ENCODE measurements at regions of chr1 and their contacts with region 1.

Region 1: GRCh38 chr1:1307908-1308755 is at the starts of genes ACAP3 and PUSL1:
- DNase-seq: peak; percentile 92 to 94 (median 92)
- H3K4me3 ChIP-seq: peak within 1 kb of the TSS; percentile 61 to 83
- H3K4me3 Mint-ChIP-seq: peak within 1 kb of the TSS; percentile 86 to 92 (median 89)
- H3K27ac ChIP-seq: peak within 1 kb of the TSS; percentile 77
- H3K27ac Mint-ChIP-seq: peak within 1 kb of the TSS; percentile 89 to 96 (median 91)
- H3K4me1 ChIP-seq: peaks cover 36% of the 10 kb centered on the region
- H3K4me1 Mint-ChIP-seq: peaks cover 13 to 29% (median 20%) of the 10 kb centered on the region in 4 donors
- H3K27me3 ChIP-seq: no peaks in the 10 kb centered on the region
- H3K27me3 Mint-ChIP-seq: no peaks in the 10 kb centered on the region
- total RNA-seq, gene ACAP3: 59.7 to 65.6 TPM
- total RNA-seq, gene PUSL1: 24.1 to 27.9 TPM

Region 2: GRCh38 chr1:1069061-1069708 is 238.9 kb before region 1 on chr1:
- CTCF ChIA-PET with region 1: no interaction called
- POLR2A ChIA-PET with region 1: no interaction called
- intact Hi-C with region 1: loop called (anchors 1 kb)
- DNase-seq: peak; percentile 87 to 92 (median 88)
- H3K4me3 ChIP-seq: peak overlapping the region in 1 of 2 donors; percentile 70
- H3K4me3 Mint-ChIP-seq: peak overlapping the region; percentile 63 to 88 (median 74)
- H3K27ac ChIP-seq: peak overlapping the region; percentile 51
- H3K27ac Mint-ChIP-seq: peak overlapping the region in 4 of 7 donors; percentile 42 to 88 (median 64)
- H3K4me1 ChIP-seq: peaks cover 12% of the 10 kb centered on the region
- H3K4me1 Mint-ChIP-seq: peaks cover 0 to 8% (median 2%) of the 10 kb centered on the region in 4 donors
- H3K27me3 ChIP-seq: no peaks in the 10 kb centered on the region
- H3K27me3 Mint-ChIP-seq: peaks cover 2 to 7% of the 10 kb centered on the region in 2 donors

Region 3: GRCh38 chr1:1273512-1274298 is 34.4 kb before region 1 on chr1 and contains the start of gene UBE2J2:
- CTCF ChIA-PET with region 1: no interaction called
- POLR2A ChIA-PET with region 1: interaction called, 5 read pairs
- intact Hi-C with region 1: loop called (anchors 1 kb)
- DNase-seq: peak; percentile 89 to 92 (median 90)
- H3K4me3 ChIP-seq: peak within 1 kb of the TSS; percentile 33 to 80
- H3K4me3 Mint-ChIP-seq: peak within 1 kb of the TSS; percentile 86 to 88 (median 87)
- H3K27ac ChIP-seq: peak within 1 kb of the TSS; percentile 83
- H3K27ac Mint-ChIP-seq: peak within 1 kb of the TSS; percentile 83 to 96 (median 89)
- H3K4me1 ChIP-seq: peaks cover 43% of the 10 kb centered on the region
- H3K4me1 Mint-ChIP-seq: peaks cover 22 to 40% (median 32%) of the 10 kb centered on the region in 4 donors
- H3K27me3 ChIP-seq: no peaks in the 10 kb centered on the region
- H3K27me3 Mint-ChIP-seq: no peaks in the 10 kb centered on the region
- total RNA-seq, gene UBE2J2: 82.8 to 92.9 TPM

Region 4: DNA sequence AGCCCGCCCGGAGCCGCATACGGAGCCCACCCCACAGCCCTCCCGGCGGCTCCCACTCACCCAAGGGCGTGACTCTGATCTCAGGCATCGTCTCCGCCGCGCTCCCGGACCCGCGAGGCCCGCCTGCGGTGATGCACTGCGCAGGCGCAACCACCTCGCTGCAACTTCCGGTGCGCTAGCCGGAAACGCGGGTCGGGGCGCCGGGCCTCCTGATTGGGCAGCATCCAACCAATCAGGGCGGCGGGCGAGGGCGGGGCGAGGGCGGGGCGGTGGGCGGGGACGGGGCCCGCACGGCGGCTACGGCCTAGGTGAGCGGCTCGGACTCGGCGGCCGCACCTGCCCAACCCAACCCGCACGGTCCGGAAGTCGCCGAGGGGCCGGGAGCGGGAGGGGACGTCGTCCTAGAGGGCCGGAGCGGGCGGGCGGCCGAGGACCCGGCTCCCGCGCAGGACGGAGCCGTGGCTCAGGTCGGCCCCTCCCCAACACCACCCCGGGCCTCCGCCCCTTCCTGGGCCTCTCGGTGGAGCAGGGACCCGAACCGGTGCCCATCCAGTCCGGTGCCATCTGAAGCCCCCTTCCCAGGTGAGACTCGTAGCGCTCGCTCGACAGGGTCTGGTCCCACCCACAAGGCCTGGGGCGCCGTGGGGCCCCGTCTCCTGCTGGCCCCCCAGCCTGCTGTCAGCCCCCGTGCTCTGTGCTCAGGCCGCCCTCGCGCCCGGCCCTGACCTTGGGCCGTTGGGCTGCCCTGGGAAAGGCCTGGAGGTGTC is 16.6 kb after region 1 on chr1 and contains the starts of genes CPTP and INTS11:
- CTCF ChIA-PET with region 1: no interaction called
- POLR2A ChIA-PET with region 1: interaction called, 14 read pairs
- intact Hi-C with region 1: loop called (anchors 1 kb)
- DNase-seq: peak; percentile 95 to 96 (median 96)
- H3K4me3 ChIP-seq: peak within 1 kb of the TSS; percentile 49 to 77
- H3K4me3 Mint-ChIP-seq: peak within 1 kb of the TSS; percentile 87 to 97 (median 93)
- H3K27ac ChIP-seq: peak within 1 kb of the TSS; percentile 89
- H3K27ac Mint-ChIP-seq: peak within 1 kb of the TSS; percentile 77 to 97 (median 91)
- H3K4me1 ChIP-seq: peaks cover 41% of the 10 kb centered on the region
- H3K4me1 Mint-ChIP-seq: peaks cover 9 to 53% (median 34%) of the 10 kb centered on the region in 4 donors
- H3K27me3 ChIP-seq: no peaks in the 10 kb centered on the region
- H3K27me3 Mint-ChIP-seq: no peaks in the 10 kb centered on the region
- total RNA-seq, gene CPTP: 25.0 to 28.3 TPM
- total RNA-seq, gene INTS11: 163 to 173 TPM

Region 5: GRCh38 chr1:1349256-1350012 is 41.3 kb after region 1 on chr1 and contains the start of gene DVL1:
- CTCF ChIA-PET with region 1: interaction called, 4 read pairs
- POLR2A ChIA-PET with region 1: no interaction called
- intact Hi-C with region 1: loop called (anchors 1 kb)
- DNase-seq: peak; percentile 65 to 80 (median 71)
- H3K4me3 ChIP-seq: peak within 1 kb of the TSS in 1 of 2 donors; percentile 51
- H3K4me3 Mint-ChIP-seq: peak within 1 kb of the TSS; percentile 70 to 85 (median 78)
- H3K27ac ChIP-seq: peak within 1 kb of the TSS; percentile 43
- H3K27ac Mint-ChIP-seq: peak within 1 kb of the TSS in 5 of 7 donors; percentile 57 to 89 (median 64)
- H3K4me1 ChIP-seq: peaks cover 25% of the 10 kb centered on the region
- H3K4me1 Mint-ChIP-seq: peaks cover 4 to 35% (median 17%) of the 10 kb centered on the region in 4 donors
- H3K27me3 ChIP-seq: no peaks in the 10 kb centered on the region
- H3K27me3 Mint-ChIP-seq: peaks cover 3 to 11% of the 10 kb centered on the region in 2 donors
- total RNA-seq, gene DVL1: 43.7 to 44.6 TPM